ENCODE measurements at regions of chr19 and their contacts with region 1.

Region 1: DNA sequence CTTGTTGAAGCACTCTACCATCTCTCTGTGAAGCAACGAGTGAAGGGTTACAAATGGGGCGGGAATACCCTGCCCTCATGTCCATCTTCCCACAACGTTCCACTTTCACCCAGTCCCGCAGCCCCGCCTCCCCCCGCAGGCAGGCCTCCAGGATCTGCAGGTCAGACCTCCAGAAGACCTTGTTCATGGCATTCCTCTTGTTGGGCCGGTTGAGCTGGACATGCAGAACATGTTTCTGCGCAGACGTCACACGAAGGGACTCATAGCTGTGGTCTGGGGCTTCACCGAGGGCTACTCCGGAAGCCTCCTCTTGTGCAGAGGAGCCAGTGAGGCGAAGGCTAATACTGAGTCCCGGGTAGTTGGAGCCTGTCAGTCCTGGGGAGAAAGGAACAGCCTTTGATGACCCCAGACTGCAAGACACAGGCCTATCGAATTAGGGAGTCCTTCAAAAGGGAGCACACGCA is 420 bp downstream of the ECH1 start:
- DNase-seq: peak; percentile 93
- H3K4me3 Mint-ChIP-seq: peak overlapping the region; percentile 84
- H3K27ac Mint-ChIP-seq: peak overlapping the region; percentile 96
- H3K4me1 Mint-ChIP-seq: peaks cover 26% of the 10 kb centered on the region
- H3K27me3 Mint-ChIP-seq: no peaks in the 10 kb centered on the region
- CTCF ChIP-seq: no peak

Region 2: DNA sequence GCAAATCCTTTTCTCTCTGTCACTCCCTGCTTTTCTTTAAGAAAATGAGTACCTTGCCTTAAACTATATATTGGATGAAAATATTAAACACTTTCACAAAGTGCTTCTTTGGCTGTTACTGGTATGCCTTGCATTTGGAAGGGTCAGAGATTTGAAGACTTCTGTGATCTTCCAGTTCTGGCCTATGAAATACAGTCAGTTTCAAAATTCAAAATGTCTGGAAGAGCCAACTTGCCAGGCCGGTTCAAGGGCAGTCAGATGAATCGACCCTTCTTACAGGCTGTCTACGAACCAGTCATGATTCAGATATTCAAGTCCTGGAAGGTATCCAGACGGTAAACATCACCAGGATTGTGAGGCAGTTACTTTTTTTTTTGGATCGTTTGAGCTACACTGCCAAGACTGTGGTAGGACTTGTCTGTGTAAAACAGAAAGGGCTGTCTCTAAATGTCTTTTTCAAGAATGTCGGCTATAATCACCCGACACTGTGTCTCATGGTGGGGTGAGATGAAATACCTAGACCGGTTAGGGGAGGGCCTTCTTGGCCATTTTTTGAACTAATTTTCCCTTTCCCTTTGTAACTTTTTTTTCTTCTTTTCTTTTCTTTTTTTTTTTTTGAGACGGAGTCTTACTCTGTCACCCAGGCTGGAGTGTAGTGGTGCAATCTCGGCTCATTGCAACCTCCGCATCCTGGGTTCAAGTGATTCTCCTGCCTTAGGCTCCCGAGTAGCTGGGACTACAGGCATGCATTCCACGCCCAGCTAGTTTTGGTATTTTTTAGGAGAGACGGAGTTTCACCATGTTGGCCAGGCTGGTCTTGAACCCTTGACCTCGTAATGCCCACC is 172.5 kb before region 1 on chr19:
- CTCF ChIA-PET with region 1: no interaction called
- intact Hi-C with region 1: loop called (anchors 5 kb)
- DNase-seq: peak; percentile 84
- H3K4me3 Mint-ChIP-seq: peak overlapping the region; percentile 99
- H3K27ac Mint-ChIP-seq: peak overlapping the region; percentile 100
- H3K4me1 Mint-ChIP-seq: peaks cover 91% of the 10 kb centered on the region
- H3K27me3 Mint-ChIP-seq: no peaks in the 10 kb centered on the region
- CTCF ChIP-seq: no peak

Region 3: DNA sequence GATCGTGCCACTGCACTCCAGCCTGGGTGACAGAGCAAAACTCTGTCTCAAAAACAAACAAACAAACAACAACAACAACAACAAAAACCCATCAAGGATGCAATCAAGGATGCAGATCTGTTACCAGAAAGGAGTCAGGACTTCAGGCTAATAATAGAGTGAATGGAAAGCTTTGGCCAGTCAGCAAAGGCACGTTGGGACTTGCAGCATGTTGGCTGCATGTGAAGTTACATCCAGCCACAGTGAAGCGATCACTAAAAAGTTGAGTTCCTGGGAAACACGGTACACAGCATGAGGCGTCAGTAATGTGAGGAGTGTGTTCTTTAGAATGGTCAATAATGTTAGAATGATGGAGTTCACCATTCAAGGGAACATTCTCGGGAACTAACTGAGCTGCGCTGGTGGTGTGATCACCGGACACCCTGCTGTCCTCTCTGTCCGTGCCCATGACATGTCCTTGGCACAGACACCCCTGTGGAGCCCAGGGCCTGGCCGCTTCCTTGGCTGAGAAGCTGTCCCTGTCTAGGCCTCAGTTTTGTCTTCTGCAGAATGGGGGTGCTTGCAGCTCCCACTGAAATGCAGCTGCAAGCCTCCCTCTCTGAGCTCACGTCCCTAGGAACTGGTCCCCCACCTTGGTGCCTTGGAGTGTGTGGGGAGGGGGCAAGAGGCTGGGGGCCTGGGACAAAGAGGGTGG is 44.5 kb before region 1 on chr19:
- CTCF ChIA-PET with region 1: no interaction called
- intact Hi-C with region 1: no loop called
- DNase-seq: no peak
- H3K4me3 Mint-ChIP-seq: no peak overlapping the region
- H3K27ac Mint-ChIP-seq: no peak overlapping the region
- H3K4me1 Mint-ChIP-seq: peaks cover 24% of the 10 kb centered on the region
- H3K27me3 Mint-ChIP-seq: no peaks in the 10 kb centered on the region
- CTCF ChIP-seq: no peak

Region 4: GRCh38 chr19:38898788-38899446 is 67.7 kb after region 1 on chr19:
- CTCF ChIA-PET with region 1: no interaction called
- intact Hi-C with region 1: no loop called
- DNase-seq: no peak
- H3K4me3 Mint-ChIP-seq: peak overlapping the region; percentile 83
- H3K27ac Mint-ChIP-seq: peak overlapping the region; percentile 91
- H3K4me1 Mint-ChIP-seq: peaks cover 22% of the 10 kb centered on the region
- H3K27me3 Mint-ChIP-seq: no peaks in the 10 kb centered on the region
- CTCF ChIP-seq: no peak

Region 5: GRCh38 chr19:40370997-40371801 is 1540.0 kb after region 1 on chr19:
- CTCF ChIA-PET with region 1: no interaction called
- intact Hi-C with region 1: no loop called
- DNase-seq: no peak
- H3K4me3 Mint-ChIP-seq: no peak overlapping the region
- H3K27ac Mint-ChIP-seq: no peak overlapping the region
- H3K4me1 Mint-ChIP-seq: no peaks in the 10 kb centered on the region
- H3K27me3 Mint-ChIP-seq: no peaks in the 10 kb centered on the region
- CTCF ChIP-seq: no peak